Naive thymus-derived CD4-positive, alpha-beta T cell (primary cell): ENCODE measurements at regions of chr15 and their contacts with region 1.

Region 1: DNA sequence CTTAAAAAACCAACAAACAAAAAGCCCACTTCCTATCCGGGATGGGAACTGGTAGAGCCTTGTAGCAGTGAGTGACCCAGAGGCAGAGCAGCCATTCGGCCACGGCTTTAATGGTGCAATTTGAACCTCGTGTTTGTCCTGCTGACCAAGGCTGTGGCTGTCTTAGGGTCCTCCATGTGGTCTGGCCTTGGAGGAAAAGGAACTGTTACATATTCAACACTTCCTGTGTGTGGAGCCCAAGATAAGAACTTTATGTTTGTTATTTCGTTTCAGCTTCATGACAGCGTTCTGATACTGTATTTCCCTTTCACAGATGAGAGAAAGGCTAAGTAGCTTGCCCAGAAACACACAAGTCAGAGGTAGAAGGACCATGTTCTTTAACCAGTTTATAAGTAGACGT is 269.8 kb downstream of the SV2B start:
- DNase-seq: peak in 4 of 9 donors; percentile 9 to 18 (median 12)
- ATAC-seq: peak; percentile 67
- H3K4me3 ChIP-seq: no peak overlapping the region
- H3K4me3 Mint-ChIP-seq: peak overlapping the region in 9 of 10 donors; percentile 17 to 68 (median 37)
- H3K27ac ChIP-seq: no peak overlapping the region
- H3K27ac Mint-ChIP-seq: peak overlapping the region in 7 of 9 donors; percentile 16 to 86 (median 61)
- H3K4me1 ChIP-seq: peaks cover 17 to 20% of the 10 kb centered on the region in 2 donors
- H3K4me1 Mint-ChIP-seq: peaks cover 15 to 53% (median 38%) of the 10 kb centered on the region in 7 donors
- H3K27me3 ChIP-seq: no peaks in the 10 kb centered on the region
- H3K27me3 Mint-ChIP-seq: peaks cover 0 to 15% (median 0%) of the 10 kb centered on the region in 5 donors

Region 2: GRCh38 chr15:91049378-91050127 is 320.3 kb before region 1 on chr15:
- CTCF ChIA-PET with region 1: no interaction called
- POLR2A ChIA-PET with region 1: no interaction called
- intact Hi-C with region 1: loop called in 1 of 2 experiments (anchors 5 kb)
- DNase-seq: peak; percentile 19 to 62 (median 54)
- ATAC-seq: peak; percentile 92
- H3K4me3 ChIP-seq: no peak overlapping the region
- H3K4me3 Mint-ChIP-seq: peak overlapping the region in 3 of 10 donors; percentile 12 to 48 (median 17)
- H3K27ac ChIP-seq: no peak overlapping the region
- H3K27ac Mint-ChIP-seq: peak overlapping the region in 4 of 9 donors; percentile 17 to 70 (median 20)
- H3K4me1 ChIP-seq: peaks cover 3 to 6% of the 10 kb centered on the region in 2 donors
- H3K4me1 Mint-ChIP-seq: peaks cover 6 to 40% (median 31%) of the 10 kb centered on the region in 7 donors
- H3K27me3 ChIP-seq: no peaks in the 10 kb centered on the region
- H3K27me3 Mint-ChIP-seq: peaks cover 10 to 41% (median 19%) of the 10 kb centered on the region in 5 donors

Region 3: DNA sequence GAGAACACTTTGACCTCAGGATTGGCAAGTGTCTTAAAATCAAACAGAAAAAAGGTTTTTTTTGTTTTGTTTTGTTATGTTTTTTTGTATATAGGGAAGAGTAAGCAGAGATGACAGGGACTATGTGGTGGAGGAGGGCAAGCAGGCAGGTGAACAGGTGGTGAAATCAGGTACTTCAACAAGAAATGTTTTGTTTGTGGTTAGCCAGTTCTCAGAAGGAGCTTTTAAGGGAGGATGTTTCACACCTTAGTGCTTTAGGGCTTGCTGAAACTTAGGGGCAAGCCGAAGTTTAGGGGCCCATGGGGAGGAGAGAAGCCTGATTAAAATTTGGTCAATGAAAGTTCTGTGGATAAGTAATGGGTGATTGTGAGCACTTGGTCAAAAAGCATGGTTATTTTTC is 113.0 kb after region 1 on chr15:
- CTCF ChIA-PET with region 1: no interaction called
- POLR2A ChIA-PET with region 1: no interaction called
- intact Hi-C with region 1: no loop called
- DNase-seq: peak in 5 of 9 donors; percentile 14 to 51 (median 37)
- ATAC-seq: peak; percentile 74
- H3K4me3 ChIP-seq: no peak overlapping the region
- H3K4me3 Mint-ChIP-seq: peak overlapping the region; percentile 7 to 67 (median 55)
- H3K27ac ChIP-seq: no peak overlapping the region
- H3K27ac Mint-ChIP-seq: peak overlapping the region; percentile 17 to 95 (median 74)
- H3K4me1 ChIP-seq: peaks cover 25 to 40% of the 10 kb centered on the region in 2 donors
- H3K4me1 Mint-ChIP-seq: peaks cover 24 to 72% (median 66%) of the 10 kb centered on the region in 7 donors
- H3K27me3 ChIP-seq: no peaks in the 10 kb centered on the region
- H3K27me3 Mint-ChIP-seq: peaks cover 0 to 2% (median 0%) of the 10 kb centered on the region in 5 donors